ENCODE measurements at regions of chr1 and their contacts with region 1.

Region 1: GRCh38 chr1:203593723-203594122 is 32.9 kb upstream of the ATP2B4 start:
- DNase-seq: no peak
- H3K4me3 ChIP-seq: no peak overlapping the region
- H3K27ac ChIP-seq: no peak overlapping the region
- H3K4me1 ChIP-seq: peaks cover 18% of the 10 kb centered on the region
- H3K27me3 ChIP-seq: no peaks in the 10 kb centered on the region
- CTCF ChIP-seq: no peak
- POLR2A ChIP-seq: no peak

Region 2: DNA sequence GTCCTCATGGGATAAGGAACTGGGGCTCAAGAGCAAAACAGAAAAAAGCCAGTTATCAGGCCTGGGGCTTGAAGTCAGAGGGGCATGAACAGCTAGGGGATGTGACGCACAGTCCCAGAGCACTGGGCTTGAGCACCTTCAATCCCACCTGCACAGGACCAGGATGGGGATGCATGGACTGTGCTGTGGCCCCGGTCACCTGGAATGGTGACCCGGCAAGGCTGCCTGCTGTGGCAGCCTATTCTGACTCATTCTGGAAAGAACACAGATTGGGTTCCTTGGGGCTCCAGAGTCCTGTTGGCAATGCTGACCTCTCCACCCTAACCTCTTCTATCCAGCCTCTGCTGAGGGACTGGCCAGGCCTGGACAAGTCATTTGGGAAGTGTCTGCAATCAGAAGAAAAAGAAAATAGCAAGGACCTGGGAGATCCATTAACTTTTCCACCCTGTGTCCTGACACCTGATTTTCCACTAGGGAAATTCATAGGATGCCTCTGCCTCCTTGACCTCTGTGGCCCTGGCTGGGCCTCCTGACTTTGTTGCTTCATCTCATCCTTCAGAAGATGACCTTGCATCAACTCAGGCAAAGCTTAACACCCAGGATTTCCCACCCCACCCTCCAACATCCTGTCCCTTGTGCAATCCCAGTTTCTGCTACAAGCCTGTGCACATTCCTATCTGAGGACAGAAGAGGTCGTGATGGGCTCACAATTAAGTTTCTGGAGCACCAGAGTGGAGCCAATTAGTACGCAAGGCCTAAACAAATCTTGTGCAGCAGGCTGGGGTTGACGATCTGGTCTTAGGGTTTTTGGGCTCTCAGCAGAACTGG is 224.9 kb before region 1 on chr1:
- intact Hi-C with region 1: loop called (anchors 10 kb)
- DNase-seq: peak in 1 of 2 donors; percentile 98
- H3K4me3 ChIP-seq: no peak overlapping the region
- H3K27ac ChIP-seq: peak overlapping the region; percentile 77
- H3K4me1 ChIP-seq: peaks cover 17% of the 10 kb centered on the region
- H3K27me3 ChIP-seq: no peaks in the 10 kb centered on the region
- CTCF ChIP-seq: peak in 2 of 3 experiments; percentile 6 to 53
- POLR2A ChIP-seq: no peak